H1 (cell line): ENCODE measurements at regions of chr16 and their contacts with region 1.

Region 1: GRCh38 chr16:96935-97381 is 18.9 kb downstream of the MPG start:
- DNase-seq: peak; percentile 84 to 97
- H3K4me3 ChIP-seq: no peak overlapping the region
- H3K27ac ChIP-seq: no peak overlapping the region
- H3K4me1 ChIP-seq: no peaks in the 10 kb centered on the region
- H3K27me3 ChIP-seq: no peaks in the 10 kb centered on the region; a peak in 1 of 7 replicates
- CTCF ChIP-seq: peak; percentile 100
- EP300 ChIP-seq: no peak
- POLR2A ChIP-seq: no peak
- RAD21 ChIP-seq: peak; percentile 90 to 92

Region 2: DNA sequence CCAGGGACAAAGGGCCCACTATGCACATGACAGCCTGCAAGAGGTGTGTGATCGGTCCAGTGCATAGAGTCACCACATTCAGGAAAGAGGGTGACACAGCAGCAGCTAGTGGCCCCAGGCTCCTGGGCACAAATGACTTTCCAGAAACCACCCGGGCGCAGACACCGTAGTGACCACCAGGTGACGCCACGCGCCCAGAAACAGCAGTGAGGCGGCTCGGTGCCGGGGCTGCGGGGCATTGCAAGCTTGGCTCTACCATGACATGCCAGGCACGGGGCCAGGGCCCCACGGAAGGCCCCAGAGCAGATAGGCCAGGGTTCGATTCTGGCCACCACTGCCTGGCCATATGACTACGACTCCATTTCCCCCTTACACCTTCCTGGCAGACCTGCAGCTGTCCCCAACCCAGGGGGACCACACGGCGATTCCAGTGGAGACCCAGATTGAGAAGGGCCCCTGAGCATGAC is 31.3 kb before region 1 on chr16:
- CTCF ChIA-PET with region 1: interaction called, 856 read pairs
- POLR2A ChIA-PET with region 1: interaction called, 153 read pairs
- DNase-seq: peak in 1 of 2 experiments; percentile 98
- H3K4me3 ChIP-seq: no peak overlapping the region
- H3K27ac ChIP-seq: no peak overlapping the region
- H3K4me1 ChIP-seq: peaks cover 0 to 14% (median 4%) of the 10 kb centered on the region in 4 experiments; a peak in 6 of 7 replicates
- H3K27me3 ChIP-seq: no peaks in the 10 kb centered on the region
- CTCF ChIP-seq: peak; percentile 98 to 100 (median 99)
- EP300 ChIP-seq: no peak
- POLR2A ChIP-seq: no peak
- RAD21 ChIP-seq: peak; percentile 99 to 100

Region 3: GRCh38 chr16:84718-85406 is 12.1 kb before region 1 on chr16:
- CTCF ChIA-PET with region 1: interaction called, 83 read pairs
- POLR2A ChIA-PET with region 1: interaction called, 7 read pairs
- DNase-seq: no peak
- H3K4me3 ChIP-seq: no peak overlapping the region
- H3K27ac ChIP-seq: no peak overlapping the region
- H3K4me1 ChIP-seq: peaks cover 0 to 8% (median 2%) of the 10 kb centered on the region in 4 experiments; a peak in 5 of 7 replicates
- H3K27me3 ChIP-seq: no peaks in the 10 kb centered on the region
- CTCF ChIP-seq: no peak
- EP300 ChIP-seq: no peak
- POLR2A ChIP-seq: no peak
- RAD21 ChIP-seq: no peak

Region 4: DNA sequence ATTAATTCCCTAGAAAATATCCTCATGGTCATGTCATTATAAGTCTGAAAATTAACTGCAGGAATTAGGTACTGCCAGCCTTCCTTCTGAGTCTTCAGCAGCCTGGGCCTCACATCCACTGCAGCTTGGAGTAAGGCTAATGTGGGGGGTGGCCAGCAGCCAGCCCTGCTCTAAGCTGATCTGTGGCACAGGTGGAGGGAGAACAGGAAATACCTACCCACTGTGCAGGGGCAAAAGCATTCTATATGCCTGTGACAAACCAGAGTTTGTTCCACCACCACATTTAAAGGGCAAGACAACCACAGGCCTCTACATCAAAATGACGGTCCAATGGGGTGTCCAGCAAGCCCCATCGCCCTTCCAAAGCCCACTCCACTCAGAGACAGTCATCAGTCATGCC is 32.1 kb after region 1 on chr16:
- CTCF ChIA-PET with region 1: interaction called, 10 read pairs
- POLR2A ChIA-PET with region 1: interaction called, 4 read pairs
- DNase-seq: no peak
- H3K4me3 ChIP-seq: no peak overlapping the region
- H3K27ac ChIP-seq: no peak overlapping the region
- H3K4me1 ChIP-seq: no peaks in the 10 kb centered on the region
- H3K27me3 ChIP-seq: no peaks in the 10 kb centered on the region
- CTCF ChIP-seq: no peak
- EP300 ChIP-seq: no peak
- POLR2A ChIP-seq: no peak
- RAD21 ChIP-seq: no peak

Region 5: DNA sequence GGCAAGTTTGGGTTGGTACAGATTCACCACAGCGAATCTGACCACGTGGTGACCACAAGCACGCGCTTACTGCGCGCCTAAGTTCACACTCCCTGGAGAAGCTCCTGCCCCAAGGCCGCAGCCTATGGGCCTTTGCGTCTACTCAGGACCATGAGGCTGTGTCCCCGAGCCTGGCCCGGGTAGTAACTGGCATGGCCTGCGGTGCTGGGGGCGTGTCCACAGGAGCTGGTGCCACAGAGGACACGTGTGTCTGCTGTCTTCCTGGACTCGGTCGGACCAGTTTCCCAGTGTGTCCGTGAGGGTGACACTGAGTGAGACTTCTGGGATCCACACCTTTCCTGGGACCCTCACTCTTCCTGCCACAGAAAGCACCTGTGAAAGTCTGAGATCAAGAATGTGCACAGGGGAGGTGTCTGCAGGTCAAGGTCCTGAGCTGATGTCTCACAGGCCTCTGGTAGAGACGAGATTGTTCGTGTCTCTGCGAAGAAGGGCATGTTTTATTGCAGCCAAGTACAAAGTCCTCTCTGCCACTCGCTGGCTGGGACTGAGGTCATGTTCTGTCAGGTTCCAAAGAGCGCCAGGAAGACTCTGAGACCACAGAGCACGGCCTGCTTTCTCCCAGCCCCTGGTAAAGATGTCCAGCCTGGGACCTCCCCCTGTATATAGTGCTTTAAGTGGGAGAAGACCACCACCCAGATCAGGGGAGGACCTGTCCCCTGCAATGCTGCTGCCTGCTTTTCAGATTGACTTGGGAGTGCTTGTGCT is 405.4 kb after region 1 on chr16:
- CTCF ChIA-PET with region 1: no interaction called
- POLR2A ChIA-PET with region 1: no interaction called
- DNase-seq: no peak
- H3K4me3 ChIP-seq: no peak overlapping the region
- H3K27ac ChIP-seq: no peak overlapping the region
- H3K4me1 ChIP-seq: no peaks in the 10 kb centered on the region; a peak in 1 of 7 replicates
- H3K27me3 ChIP-seq: no peaks in the 10 kb centered on the region
- CTCF ChIP-seq: no peak
- EP300 ChIP-seq: no peak
- POLR2A ChIP-seq: no peak
- RAD21 ChIP-seq: no peak